Aorta (tissue), 5 donors: ENCODE measurements at regions of chr10 and their contacts with region 1.

Region 1: DNA sequence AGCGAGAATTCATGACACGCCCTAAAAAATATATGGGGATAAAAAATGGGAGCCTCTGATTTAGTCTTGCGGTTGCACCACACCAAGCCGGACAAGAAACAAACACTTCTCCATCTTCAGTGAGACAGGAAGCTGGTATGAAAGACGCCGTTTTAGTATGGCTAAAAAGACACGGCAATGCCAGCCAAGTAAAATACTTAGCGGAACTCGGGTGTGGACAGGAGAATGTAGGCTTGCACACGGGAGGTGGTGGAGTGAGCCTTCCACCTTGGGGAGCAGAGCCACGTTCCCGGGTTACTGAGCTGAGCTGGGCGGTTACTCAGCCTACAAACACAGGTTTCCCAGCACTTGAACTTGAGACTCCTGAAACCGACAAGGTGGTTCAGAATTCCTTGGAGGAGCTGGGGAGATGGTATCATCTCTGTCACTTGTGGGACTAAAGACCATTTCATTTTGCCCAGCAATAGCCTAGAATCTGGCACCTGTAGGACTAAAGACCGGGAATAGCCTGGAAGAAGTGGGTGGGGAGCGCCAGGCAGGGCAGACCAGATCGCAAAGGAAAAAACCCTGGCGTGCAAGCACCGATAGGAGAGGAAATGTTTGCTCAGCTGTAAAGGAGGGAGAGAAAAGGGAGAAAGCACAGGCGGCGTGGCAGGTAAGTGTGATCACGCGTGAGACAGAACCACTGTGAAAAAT is 34.8 kb upstream of the SEPHS1 start:
- DNase-seq: no peak
- ATAC-seq: no peak
- H3K4me3 ChIP-seq: peak overlapping the region in 1 of 2 donors; percentile 4
- H3K27ac ChIP-seq: no peak overlapping the region
- H3K4me1 ChIP-seq: no peaks in the 10 kb centered on the region
- H3K27me3 ChIP-seq: no peaks in the 10 kb centered on the region

Region 2: GRCh38 chr10:13448216-13448615 is 65.4 kb after region 1 on chr10:
- intact Hi-C with region 1: loop called in 1 of 2 experiments (anchors 5 kb)
- DNase-seq: no peak
- ATAC-seq: no peak
- H3K4me3 ChIP-seq: no peak overlapping the region
- H3K27ac ChIP-seq: no peak overlapping the region
- H3K4me1 ChIP-seq: no peaks in the 10 kb centered on the region
- H3K27me3 ChIP-seq: no peaks in the 10 kb centered on the region